Posterior cingulate gyrus (tissue), 11 donors: ENCODE measurements at regions of chr7 and their contacts with region 1.

Region 1: DNA sequence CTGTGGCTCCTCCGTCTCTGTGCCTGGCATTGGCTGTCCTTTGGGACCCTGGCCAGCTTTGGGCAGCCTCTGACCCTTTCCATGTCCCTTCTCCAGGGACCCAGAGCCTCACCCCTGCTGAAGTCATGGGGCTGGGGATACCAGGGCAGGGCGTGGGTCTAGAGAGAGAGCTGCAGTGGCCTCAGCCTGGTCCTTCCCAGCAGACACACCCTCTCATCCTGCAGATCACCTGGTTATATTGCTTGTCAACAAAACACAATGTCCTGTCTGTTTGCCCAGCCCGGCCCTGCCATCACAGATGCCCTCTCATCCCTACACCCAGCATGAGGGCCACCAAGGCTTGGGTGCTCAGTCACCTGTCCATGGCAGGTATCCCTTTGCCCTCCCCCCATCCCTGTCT is 1.8 kb downstream of the MUC17 start:
- DNase-seq: peak in 3 of 10 donors; percentile 24 to 65 (median 37)

Region 2: GRCh38 chr7:100965723-100966541 is 55.8 kb before region 1 on chr7:
- intact Hi-C with region 1: loop called (anchors 5 kb)
- DNase-seq: peak in 8 of 10 donors; percentile 20 to 92 (median 53)